Lower leg skin (tissue), 4 donors: ENCODE measurements at regions of chr6 and their contacts with region 1.

Region 1: GRCh38 chr6:4675106-4675505 is 101.1 kb upstream of the CDYL start:
- DNase-seq: peak in 1 of 2 donors; percentile 53
- H3K4me3 ChIP-seq: no peak overlapping the region
- CTCF ChIP-seq: no peak
- POLR2A ChIP-seq: no peak

Region 2: DNA sequence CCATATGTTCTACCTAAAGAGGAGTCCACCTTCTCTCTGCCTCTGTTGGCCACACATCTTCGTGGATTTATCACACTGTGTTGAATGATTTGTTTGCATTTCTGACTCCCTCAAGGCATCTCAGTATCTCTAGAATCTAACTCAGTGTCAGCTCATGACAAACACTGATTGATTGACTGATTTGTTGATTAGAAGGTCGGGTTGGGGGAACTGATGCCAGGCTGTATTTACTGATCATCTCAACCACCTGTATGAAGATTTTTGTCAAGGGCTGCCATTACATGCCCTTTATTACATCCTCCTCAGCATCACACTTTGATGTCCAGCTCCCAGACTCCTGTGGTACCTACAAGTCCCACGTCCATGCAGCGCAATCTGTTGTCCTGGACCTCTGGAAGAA is 1971.1 kb before region 1 on chr6:
- intact Hi-C with region 1: loop called (anchors 5 kb)
- DNase-seq: no peak
- H3K4me3 ChIP-seq: no peak overlapping the region
- CTCF ChIP-seq: no peak
- POLR2A ChIP-seq: no peak